ENCODE measurements at regions of chr9 and their contacts with region 1.

Region 1: GRCh38 chr9:70868661-70869652 is 252.5 kb downstream of the TRPM3 start:
- DNase-seq: peak; percentile 82
- H3K4me3 ChIP-seq: peak overlapping the region; percentile 44 to 84 (median 70)
- H3K27ac ChIP-seq: no peak overlapping the region
- H3K4me1 ChIP-seq: peaks cover 4% of the 10 kb centered on the region
- H3K27me3 ChIP-seq: no peaks in the 10 kb centered on the region
- CTCF ChIP-seq: no peak
- POLR2A ChIP-seq: no peak

Region 2: GRCh38 chr9:70285246-70285645 is 583.7 kb before region 1 on chr9:
- CTCF ChIA-PET with region 1: no interaction called
- POLR2A ChIA-PET with region 1: no interaction called
- dilution Hi-C with region 1: no loop called
- intact Hi-C with region 1: no loop called
- DNase-seq: no peak
- H3K4me3 ChIP-seq: no peak overlapping the region
- H3K27ac ChIP-seq: no peak overlapping the region
- H3K4me1 ChIP-seq: no peaks in the 10 kb centered on the region
- H3K27me3 ChIP-seq: no peaks in the 10 kb centered on the region
- CTCF ChIP-seq: no peak
- POLR2A ChIP-seq: no peak

Region 3: GRCh38 chr9:70802206-70802605 is 66.8 kb before region 1 on chr9:
- CTCF ChIA-PET with region 1: no interaction called
- POLR2A ChIA-PET with region 1: no interaction called
- dilution Hi-C with region 1: no loop called
- intact Hi-C with region 1: no loop called
- DNase-seq: no peak
- H3K4me3 ChIP-seq: no peak overlapping the region
- H3K27ac ChIP-seq: no peak overlapping the region
- H3K4me1 ChIP-seq: no peaks in the 10 kb centered on the region
- H3K27me3 ChIP-seq: no peaks in the 10 kb centered on the region
- CTCF ChIP-seq: no peak
- POLR2A ChIP-seq: no peak

Region 4: GRCh38 chr9:70902692-70903131 is 33.8 kb after region 1 on chr9:
- CTCF ChIA-PET with region 1: no interaction called
- POLR2A ChIA-PET with region 1: no interaction called
- dilution Hi-C with region 1: no loop called
- intact Hi-C with region 1: loop called (anchors 2 kb)
- DNase-seq: peak; percentile 87
- H3K4me3 ChIP-seq: peak overlapping the region in 2 of 3 experiments; percentile 20 to 57
- H3K27ac ChIP-seq: peak overlapping the region; percentile 95
- H3K4me1 ChIP-seq: peaks cover 29% of the 10 kb centered on the region
- H3K27me3 ChIP-seq: no peaks in the 10 kb centered on the region
- CTCF ChIP-seq: no peak
- POLR2A ChIP-seq: peak; percentile 61

Region 5: DNA sequence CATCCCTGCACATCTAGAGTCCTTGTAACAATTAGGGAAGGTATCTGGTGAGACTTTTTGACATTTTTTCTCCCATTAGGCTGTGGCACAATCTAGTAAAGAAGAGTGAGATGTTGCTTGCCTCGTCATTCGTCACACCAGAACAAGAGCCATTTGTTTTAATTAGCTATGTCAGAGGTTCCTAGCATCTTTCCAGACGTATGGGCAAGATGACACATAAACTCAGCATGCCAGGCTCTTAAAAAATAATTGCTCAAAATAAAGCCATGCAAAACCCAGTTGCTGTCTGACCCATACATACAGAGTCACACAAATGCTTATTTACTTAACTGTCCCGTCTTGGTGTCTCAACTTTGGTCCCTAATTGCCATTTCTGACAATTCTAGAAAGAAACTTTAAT is 126.6 kb after region 1 on chr9:
- CTCF ChIA-PET with region 1: no interaction called
- POLR2A ChIA-PET with region 1: no interaction called
- dilution Hi-C with region 1: no loop called
- intact Hi-C with region 1: no loop called
- DNase-seq: no peak
- H3K4me3 ChIP-seq: no peak overlapping the region
- H3K27ac ChIP-seq: no peak overlapping the region
- H3K4me1 ChIP-seq: no peaks in the 10 kb centered on the region
- H3K27me3 ChIP-seq: no peaks in the 10 kb centered on the region
- CTCF ChIP-seq: no peak
- POLR2A ChIP-seq: no peak